CD4-positive, alpha-beta T cell (primary cell): ENCODE measurements at regions of chr19 and their contacts with region 1.

Region 1: DNA sequence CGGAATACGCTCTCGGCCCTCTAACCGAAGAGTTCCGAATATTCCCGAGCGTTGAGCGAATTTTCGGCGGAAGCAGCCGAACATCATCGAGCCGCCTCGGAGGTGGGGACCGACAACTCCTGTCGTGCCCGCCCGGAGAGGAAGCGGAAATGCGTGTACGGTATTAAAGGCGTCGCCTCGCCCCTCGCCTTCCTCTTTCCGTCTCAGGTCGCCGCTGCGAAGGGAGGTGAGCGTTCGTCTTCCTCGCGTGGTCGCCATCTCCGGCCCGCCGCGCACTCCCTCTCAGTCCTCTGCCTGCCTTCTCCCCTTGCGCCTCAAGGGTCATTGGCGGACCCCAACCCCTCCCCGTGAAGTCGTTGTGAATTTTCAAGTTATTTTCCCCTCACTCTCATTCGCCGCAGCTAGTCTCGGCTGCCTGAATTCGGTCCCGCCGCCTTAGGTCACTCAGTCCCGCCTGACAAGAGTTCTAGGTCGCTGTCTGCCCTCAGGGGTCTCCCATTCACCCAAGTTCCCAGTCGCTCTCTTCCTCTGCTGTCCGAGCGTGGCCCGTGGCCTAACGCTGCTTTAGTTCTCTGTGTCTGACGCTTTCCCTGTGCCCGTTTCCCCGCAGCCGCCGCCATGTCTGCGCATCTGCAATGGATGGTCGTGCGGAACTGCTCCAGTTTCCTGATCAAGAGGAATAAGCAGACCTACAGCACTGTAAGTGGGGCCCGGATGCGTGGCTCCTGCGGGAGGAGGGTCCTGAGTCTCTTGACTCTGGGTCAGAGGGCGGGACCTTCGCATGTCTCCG is at the start of gene RPL28:
- DNase-seq: peak; percentile 96 to 99 (median 98)
- ATAC-seq: peak; percentile 78
- H3K4me3 ChIP-seq: peak within 1 kb of the TSS; percentile 99
- H3K4me3 Mint-ChIP-seq: peak within 1 kb of the TSS; percentile 100
- H3K27ac ChIP-seq: peak within 1 kb of the TSS; percentile 72 to 96
- H3K27ac Mint-ChIP-seq: peak within 1 kb of the TSS; percentile 97
- H3K4me1 ChIP-seq: peaks cover 73% of the 10 kb centered on the region
- H3K4me1 Mint-ChIP-seq: peaks cover 82% of the 10 kb centered on the region
- H3K27me3 ChIP-seq: no peaks in the 10 kb centered on the region
- H3K27me3 Mint-ChIP-seq: no peaks in the 10 kb centered on the region
- CTCF ChIP-seq: no peak
- total RNA-seq, gene RPL28: 3,995 to 4,178 TPM

Region 2: GRCh38 chr19:55301459-55302317 is 84.2 kb before region 1 on chr19:
- CTCF ChIA-PET with region 1: interaction called, 31 read pairs
- POLR2A ChIA-PET with region 1: interaction called, 3 read pairs
- intact Hi-C with region 1: loop called (anchors 1 to 2 kb)
- DNase-seq: peak; percentile 87 to 98 (median 94)
- ATAC-seq: peak; percentile 89
- H3K4me3 ChIP-seq: peak overlapping the region; percentile 37
- H3K4me3 Mint-ChIP-seq: peak overlapping the region; percentile 88
- H3K27ac ChIP-seq: no peak overlapping the region
- H3K27ac Mint-ChIP-seq: peak overlapping the region; percentile 61
- H3K4me1 ChIP-seq: peaks cover 21% of the 10 kb centered on the region
- H3K4me1 Mint-ChIP-seq: peaks cover 14% of the 10 kb centered on the region
- H3K27me3 ChIP-seq: no peaks in the 10 kb centered on the region
- H3K27me3 Mint-ChIP-seq: no peaks in the 10 kb centered on the region
- CTCF ChIP-seq: peak; percentile 95

Region 3: DNA sequence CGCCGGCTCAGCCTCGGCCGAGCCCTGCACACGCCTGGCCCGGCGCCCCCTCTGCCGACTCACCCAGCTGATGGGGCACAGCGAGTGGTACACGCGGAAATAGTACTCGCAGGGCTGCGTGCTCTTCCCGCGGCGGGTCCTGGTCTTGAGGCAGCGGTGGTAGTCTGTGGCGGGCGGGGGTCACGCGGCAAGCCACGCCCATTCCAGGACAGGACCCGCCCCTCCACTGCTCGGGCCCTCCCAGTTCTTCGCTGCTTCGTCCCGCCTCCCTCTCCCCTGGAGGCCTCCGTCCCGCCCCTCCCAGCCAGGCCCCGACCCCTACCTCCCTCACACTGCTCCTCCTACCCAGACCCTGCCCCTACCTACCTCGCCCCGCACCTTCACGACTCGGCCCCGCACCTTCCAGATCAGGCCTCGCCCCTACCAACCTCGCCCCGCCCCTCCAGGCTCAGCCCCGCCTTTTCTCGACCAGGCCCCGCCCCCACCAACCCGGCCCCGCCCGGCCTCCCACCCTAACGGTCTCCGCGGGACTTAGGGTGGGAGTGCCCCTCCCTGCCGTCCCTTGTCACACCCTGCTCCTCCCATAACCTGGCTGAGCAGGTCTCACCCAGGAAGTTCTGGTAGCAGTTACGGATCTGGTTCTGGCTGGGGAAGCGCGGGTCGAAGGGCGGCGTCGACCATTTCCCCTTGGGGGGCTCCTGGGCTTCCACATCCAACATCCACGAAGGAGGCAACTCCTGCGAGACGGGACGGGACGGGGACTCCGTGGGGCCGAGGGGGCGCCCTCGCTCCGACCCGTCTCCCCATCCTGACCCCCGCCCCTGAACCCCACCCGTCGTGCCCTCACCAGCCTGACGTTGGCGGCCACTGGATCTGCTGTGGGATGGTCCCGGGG is 31.9 kb before region 1 on chr19:
- CTCF ChIA-PET with region 1: no interaction called
- POLR2A ChIA-PET with region 1: interaction called, 6 read pairs
- intact Hi-C with region 1: loop called in 1 of 2 experiments (anchors 5 kb)
- DNase-seq: peak; percentile 30 to 85 (median 60)
- ATAC-seq: peak; percentile 67
- H3K4me3 ChIP-seq: peak overlapping the region; percentile 54
- H3K4me3 Mint-ChIP-seq: peak overlapping the region; percentile 51
- H3K27ac ChIP-seq: no peak overlapping the region
- H3K27ac Mint-ChIP-seq: no peak overlapping the region
- H3K4me1 ChIP-seq: peaks cover 29% of the 10 kb centered on the region
- H3K4me1 Mint-ChIP-seq: peaks cover 25% of the 10 kb centered on the region
- H3K27me3 ChIP-seq: peaks cover 34% of the 10 kb centered on the region in 2 experiments
- H3K27me3 Mint-ChIP-seq: peaks cover 58% of the 10 kb centered on the region
- CTCF ChIP-seq: no peak

Region 4: GRCh38 chr19:55407800-55408532 is 22.0 kb after region 1 on chr19:
- CTCF ChIA-PET with region 1: no interaction called
- POLR2A ChIA-PET with region 1: interaction called, 45 read pairs
- intact Hi-C with region 1: loop called (anchors 1 to 2 kb)
- DNase-seq: peak; percentile 91 to 99 (median 96)
- ATAC-seq: peak; percentile 92
- H3K4me3 ChIP-seq: peak overlapping the region; percentile 61
- H3K4me3 Mint-ChIP-seq: peak overlapping the region; percentile 94
- H3K27ac ChIP-seq: peak overlapping the region; percentile 96 to 100
- H3K27ac Mint-ChIP-seq: peak overlapping the region; percentile 99
- H3K4me1 ChIP-seq: peaks cover 30% of the 10 kb centered on the region
- H3K4me1 Mint-ChIP-seq: peaks cover 29% of the 10 kb centered on the region
- H3K27me3 ChIP-seq: no peaks in the 10 kb centered on the region
- H3K27me3 Mint-ChIP-seq: no peaks in the 10 kb centered on the region
- CTCF ChIP-seq: no peak

Region 5: GRCh38 chr19:55643348-55644176 is 257.6 kb after region 1 on chr19 and contains the start of gene ZNF581:
- CTCF ChIA-PET with region 1: no interaction called
- POLR2A ChIA-PET with region 1: no interaction called
- intact Hi-C with region 1: loop called in 1 of 2 experiments (anchors 5 kb)
- DNase-seq: peak; percentile 63 to 92 (median 74)
- ATAC-seq: peak; percentile 54
- H3K4me3 ChIP-seq: peak within 1 kb of the TSS; percentile 78
- H3K4me3 Mint-ChIP-seq: peak within 1 kb of the TSS; percentile 89
- H3K27ac ChIP-seq: peak within 1 kb of the TSS; percentile 71 to 78
- H3K27ac Mint-ChIP-seq: peak within 1 kb of the TSS; percentile 88
- H3K4me1 ChIP-seq: peaks cover 77% of the 10 kb centered on the region
- H3K4me1 Mint-ChIP-seq: peaks cover 54% of the 10 kb centered on the region
- H3K27me3 ChIP-seq: no peaks in the 10 kb centered on the region
- H3K27me3 Mint-ChIP-seq: no peaks in the 10 kb centered on the region
- CTCF ChIP-seq: no peak
- total RNA-seq, gene ZNF581: 23.1 to 24.7 TPM